Activated B cell treated with CpG ODN at 0.5 μM for 24 hours (primary cell): ENCODE measurements at regions of chr7 and their contacts with region 1.

Region 1: GRCh38 chr7:94657771-94658693 is 2.1 kb upstream of the SGCE start:
- DNase-seq: peak; percentile 90
- ATAC-seq: peak; percentile 82
- H3K4me3 Mint-ChIP-seq: peak overlapping the region; percentile 89
- H3K27ac Mint-ChIP-seq: no peak overlapping the region
- H3K4me1 Mint-ChIP-seq: peaks cover 20% of the 10 kb centered on the region
- H3K27me3 Mint-ChIP-seq: no peaks in the 10 kb centered on the region
- CTCF ChIP-seq: no peak

Region 2: DNA sequence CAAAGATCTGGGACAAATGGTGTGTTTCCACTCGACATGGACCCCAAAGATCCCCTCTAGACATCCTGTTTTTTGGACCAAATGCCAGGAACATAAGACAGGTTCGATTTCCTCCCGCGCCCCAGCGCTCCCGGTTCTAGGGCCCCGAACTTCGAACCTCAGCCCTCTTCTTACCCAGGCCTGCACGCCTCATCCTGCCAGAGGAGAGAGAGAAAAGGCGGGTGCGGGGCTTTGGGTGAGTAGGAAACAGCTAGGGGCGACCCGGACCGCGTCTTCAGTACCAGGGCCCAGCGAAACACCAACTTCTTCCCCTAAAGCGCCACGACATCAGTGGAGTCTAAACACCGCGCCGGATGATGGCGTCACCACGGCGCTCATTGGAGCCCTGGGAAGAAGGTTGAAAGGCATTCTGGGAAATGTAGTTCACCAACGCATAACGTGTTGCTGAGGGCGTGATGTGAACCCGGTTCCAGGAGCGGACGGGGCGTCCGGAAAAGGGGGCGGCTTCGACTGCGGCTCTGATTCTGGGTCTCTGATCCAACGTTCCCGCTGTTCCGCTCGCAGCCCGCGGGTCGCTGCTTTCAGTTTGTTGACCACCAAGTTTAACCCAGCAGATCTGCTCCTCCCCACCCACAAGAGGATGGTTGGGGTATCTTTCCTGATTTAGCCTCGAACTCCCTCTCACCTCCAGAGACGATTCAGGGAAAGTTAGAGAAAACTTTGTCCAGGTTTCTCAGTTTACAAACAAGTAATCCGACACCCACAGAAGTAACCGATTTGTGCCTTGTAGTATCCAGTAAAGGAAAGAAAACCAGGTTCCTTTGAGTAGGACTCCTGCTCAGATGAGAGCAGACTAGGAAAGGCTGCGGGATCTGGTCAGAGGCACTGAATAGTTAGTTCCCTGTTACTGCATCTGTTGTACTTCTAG is 653.7 kb before region 1 on chr7 and contains the start of gene BET1:
- CTCF ChIA-PET with region 1: no interaction called
- POLR2A ChIA-PET with region 1: no interaction called
- intact Hi-C with region 1: loop called (anchors 5 kb)
- DNase-seq: peak; percentile 89
- ATAC-seq: peak; percentile 96
- H3K4me3 Mint-ChIP-seq: peak within 1 kb of the TSS; percentile 100
- H3K27ac Mint-ChIP-seq: peak within 1 kb of the TSS; percentile 99
- H3K4me1 Mint-ChIP-seq: peaks cover 50% of the 10 kb centered on the region
- H3K27me3 Mint-ChIP-seq: peaks cover 4% of the 10 kb centered on the region
- CTCF ChIP-seq: no peak
- total RNA-seq, gene BET1: 23.0 and 23.7 TPM in 2 replicates

Region 3: DNA sequence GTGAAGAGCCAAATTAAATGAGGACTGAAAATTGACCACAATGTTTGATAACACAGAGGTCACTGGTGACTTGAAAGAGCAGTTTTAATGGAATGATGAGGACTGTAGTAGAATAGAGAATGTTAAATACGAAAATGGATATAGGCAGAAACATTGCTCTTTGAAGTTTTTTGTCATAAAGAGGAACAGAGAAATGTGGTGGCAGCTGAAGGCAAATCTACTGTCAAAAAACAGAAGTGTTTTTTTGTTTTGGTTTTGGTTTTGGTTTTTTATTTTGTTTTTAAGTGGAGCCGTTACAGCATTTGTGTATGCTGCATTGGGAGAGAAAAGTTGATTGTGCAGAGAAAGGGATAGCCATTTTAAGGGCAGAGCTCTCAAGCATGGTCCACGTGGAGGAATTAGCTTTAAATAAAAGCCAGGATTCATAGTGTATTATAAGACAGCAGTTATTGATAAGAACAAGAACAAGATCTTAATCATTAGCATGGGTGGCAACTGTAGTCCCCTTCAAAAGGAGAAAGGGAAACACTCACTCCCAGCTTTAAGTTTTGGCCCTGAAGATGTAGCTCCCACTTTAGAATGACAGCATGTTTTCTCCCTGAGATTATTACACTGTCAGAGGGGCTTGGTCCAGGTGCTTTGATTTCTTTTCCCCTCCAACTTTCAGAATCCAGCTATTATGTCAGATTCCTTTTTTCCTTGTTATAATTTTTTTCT is 497.2 kb before region 1 on chr7:
- CTCF ChIA-PET with region 1: no interaction called
- POLR2A ChIA-PET with region 1: no interaction called
- intact Hi-C with region 1: loop called (anchors 5 kb)
- DNase-seq: no peak
- ATAC-seq: peak; percentile 79
- H3K4me3 Mint-ChIP-seq: peak overlapping the region; percentile 78
- H3K27ac Mint-ChIP-seq: peak overlapping the region; percentile 89
- H3K4me1 Mint-ChIP-seq: peaks cover 41% of the 10 kb centered on the region
- H3K27me3 Mint-ChIP-seq: no peaks in the 10 kb centered on the region
- CTCF ChIP-seq: no peak

Region 4: DNA sequence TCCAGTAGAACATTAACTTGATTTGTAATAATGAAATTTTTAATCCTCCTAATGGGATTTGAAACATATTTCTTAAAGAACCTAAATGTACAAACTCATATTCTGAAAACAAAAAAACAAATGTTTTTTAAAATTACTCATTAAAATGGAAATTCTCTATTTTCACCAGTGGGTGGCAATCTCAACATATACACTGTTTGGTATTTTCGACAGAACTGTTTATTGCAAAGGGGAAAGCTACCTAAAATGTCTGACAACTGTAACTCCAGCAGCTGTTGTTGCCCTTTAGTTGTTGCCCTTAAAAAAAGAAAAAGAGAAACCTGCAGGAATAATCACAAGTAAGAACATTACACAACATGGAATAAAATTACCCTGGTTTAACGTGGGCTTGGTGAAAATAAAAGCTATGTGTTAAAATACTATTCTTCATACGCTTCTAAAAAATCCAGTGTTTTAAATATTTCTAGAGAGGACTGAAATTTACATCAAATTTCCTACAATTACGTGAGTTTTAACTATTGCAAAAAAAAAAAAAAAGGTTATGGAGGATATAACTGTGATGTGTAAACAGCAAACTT is 208.8 kb before region 1 on chr7:
- CTCF ChIA-PET with region 1: interaction called, 20 read pairs
- POLR2A ChIA-PET with region 1: no interaction called
- intact Hi-C with region 1: loop called (anchors 1 kb)
- DNase-seq: no peak
- ATAC-seq: no peak
- H3K4me3 Mint-ChIP-seq: no peak overlapping the region
- H3K27ac Mint-ChIP-seq: no peak overlapping the region
- H3K4me1 Mint-ChIP-seq: no peaks in the 10 kb centered on the region
- H3K27me3 Mint-ChIP-seq: peaks cover 10% of the 10 kb centered on the region
- CTCF ChIP-seq: no peak

Region 5: DNA sequence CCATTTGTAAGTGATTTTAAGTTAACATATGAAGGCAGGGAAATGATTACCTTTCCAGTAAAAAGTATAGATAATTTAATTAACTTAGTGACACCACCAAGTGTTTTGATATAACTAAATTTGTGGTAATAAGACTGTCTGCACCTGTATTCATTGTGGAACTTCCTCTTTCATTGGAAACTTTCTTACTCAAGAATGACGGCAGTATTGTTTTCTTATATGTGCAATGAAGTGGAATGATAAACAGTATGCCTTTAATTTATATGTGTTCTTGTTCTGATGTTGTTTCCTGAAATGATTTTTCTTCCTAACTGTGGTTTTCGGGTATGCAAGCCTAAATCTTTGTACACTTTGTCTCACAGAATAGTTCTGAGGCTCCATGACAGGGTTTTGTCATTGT is 102.0 kb before region 1 on chr7:
- CTCF ChIA-PET with region 1: no interaction called
- POLR2A ChIA-PET with region 1: no interaction called
- intact Hi-C with region 1: loop called (anchors 10 kb)
- DNase-seq: no peak
- ATAC-seq: peak; percentile 92
- H3K4me3 Mint-ChIP-seq: peak overlapping the region; percentile 25
- H3K27ac Mint-ChIP-seq: peak overlapping the region; percentile 9
- H3K4me1 Mint-ChIP-seq: peaks cover 37% of the 10 kb centered on the region
- H3K27me3 Mint-ChIP-seq: no peaks in the 10 kb centered on the region
- CTCF ChIP-seq: no peak

Region 6: DNA sequence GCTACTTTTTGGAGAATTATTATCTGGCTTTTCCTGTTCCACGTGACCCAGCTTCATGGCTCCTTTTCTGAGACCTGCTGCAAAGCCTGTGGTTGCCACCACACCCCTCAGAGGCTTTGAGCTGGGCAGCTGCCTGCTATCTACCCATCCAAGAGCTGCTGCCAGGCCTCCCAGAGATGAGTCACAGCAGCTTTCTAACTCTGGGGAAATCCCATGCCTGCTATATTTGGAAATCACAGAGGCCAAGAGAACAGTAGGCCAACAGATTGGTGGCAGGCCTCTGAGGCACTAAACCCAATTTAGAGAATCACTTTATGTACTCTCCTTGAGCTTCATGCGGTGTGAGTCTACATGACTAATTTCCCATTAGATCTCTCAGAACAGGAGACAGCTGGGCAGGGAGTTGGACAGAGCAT is 37.3 kb before region 1 on chr7:
- CTCF ChIA-PET with region 1: interaction called, 5 read pairs
- POLR2A ChIA-PET with region 1: interaction called, 6 read pairs
- intact Hi-C with region 1: loop called (anchors 2 kb)
- DNase-seq: peak; percentile 23
- ATAC-seq: peak; percentile 98
- H3K4me3 Mint-ChIP-seq: no peak overlapping the region
- H3K27ac Mint-ChIP-seq: peak overlapping the region; percentile 68
- H3K4me1 Mint-ChIP-seq: peaks cover 11% of the 10 kb centered on the region
- H3K27me3 Mint-ChIP-seq: no peaks in the 10 kb centered on the region
- CTCF ChIP-seq: no peak

Region 7: DNA sequence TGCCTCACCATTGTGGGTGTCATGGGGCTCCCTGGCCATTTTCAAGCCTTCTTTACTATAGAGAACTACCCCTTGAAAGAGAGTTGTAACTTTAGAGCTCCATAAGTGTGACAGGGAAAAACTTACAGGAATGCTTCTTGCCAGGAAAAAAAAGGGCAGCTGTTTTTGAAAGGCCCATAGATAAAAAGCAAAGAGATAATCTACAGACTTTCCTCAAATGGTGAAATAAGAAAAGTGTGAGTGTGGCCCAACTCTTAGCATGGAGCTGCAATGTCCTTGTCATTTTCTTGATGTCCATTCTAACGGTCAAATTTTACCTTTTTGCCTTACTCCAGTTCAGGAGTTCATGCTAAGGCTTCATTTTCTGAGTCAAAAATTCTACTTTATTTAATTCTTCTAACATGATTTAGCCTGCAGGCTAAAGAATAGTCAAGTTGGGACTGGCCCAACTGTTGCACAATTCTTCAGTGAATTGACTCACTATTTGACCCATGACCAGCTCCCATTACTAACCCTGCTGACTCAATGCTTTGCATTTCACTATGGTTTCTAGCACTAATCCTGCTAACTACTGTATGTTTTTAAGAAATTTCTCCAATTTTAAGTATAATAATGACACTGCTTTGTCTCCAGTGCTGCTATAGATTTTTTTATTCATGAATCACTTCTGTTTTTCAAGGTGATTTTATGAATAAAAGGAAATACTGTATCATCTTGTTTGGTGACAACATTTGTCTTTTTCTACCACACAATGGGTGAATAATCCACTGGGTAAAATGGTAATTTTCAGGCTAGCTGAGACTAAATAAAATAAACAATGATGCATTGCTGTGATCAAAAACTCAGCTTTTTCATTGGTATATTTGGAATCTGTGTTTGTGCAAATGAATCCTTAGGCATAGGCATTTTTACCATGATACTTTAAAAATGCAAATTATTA is 39.3 kb after region 1 on chr7:
- CTCF ChIA-PET with region 1: no interaction called
- POLR2A ChIA-PET with region 1: no interaction called
- intact Hi-C with region 1: no loop called
- DNase-seq: no peak
- ATAC-seq: no peak
- H3K4me3 Mint-ChIP-seq: no peak overlapping the region
- H3K27ac Mint-ChIP-seq: no peak overlapping the region
- H3K4me1 Mint-ChIP-seq: no peaks in the 10 kb centered on the region
- H3K27me3 Mint-ChIP-seq: peaks cover 7% of the 10 kb centered on the region
- CTCF ChIP-seq: no peak

Region 8: GRCh38 chr7:95608359-95609173 is 950.5 kb after region 1 on chr7:
- CTCF ChIA-PET with region 1: no interaction called
- POLR2A ChIA-PET with region 1: no interaction called
- intact Hi-C with region 1: loop called (anchors 10 kb)
- DNase-seq: peak; percentile 49
- ATAC-seq: peak; percentile 89
- H3K4me3 Mint-ChIP-seq: peak overlapping the region; percentile 81
- H3K27ac Mint-ChIP-seq: peak overlapping the region; percentile 91
- H3K4me1 Mint-ChIP-seq: peaks cover 67% of the 10 kb centered on the region
- H3K27me3 Mint-ChIP-seq: no peaks in the 10 kb centered on the region
- CTCF ChIP-seq: no peak